Activated CD4-positive, alpha-beta T cell treated with anti-CD3 and anti-CD28 coated beads, Interleukin-2, amount 10 ng/mL, durations not matched to agents 7 days and 5 days (primary cell): ENCODE measurements at regions of chr6 and their contacts with region 1.

Region 1: GRCh38 chr6:31739639-31740396 is at the start of gene MSH5:
- DNase-seq: peak; percentile 98
- H3K4me3 Mint-ChIP-seq: peak within 1 kb of the TSS; percentile 94
- H3K27ac Mint-ChIP-seq: peak within 1 kb of the TSS; percentile 96
- H3K4me1 Mint-ChIP-seq: peaks cover 56% of the 10 kb centered on the region
- H3K27me3 Mint-ChIP-seq: no peaks in the 10 kb centered on the region
- total RNA-seq, gene MSH5: 56.1 to 58.0 TPM

Region 2: GRCh38 chr6:31513456-31514165 is 226.2 kb before region 1 on chr6:
- CTCF ChIA-PET with region 1: no interaction called
- POLR2A ChIA-PET with region 1: no interaction called
- DNase-seq: no peak
- H3K4me3 Mint-ChIP-seq: no peak overlapping the region
- H3K27ac Mint-ChIP-seq: no peak overlapping the region
- H3K4me1 Mint-ChIP-seq: peaks cover 4% of the 10 kb centered on the region
- H3K27me3 Mint-ChIP-seq: peaks cover 7% of the 10 kb centered on the region

Region 3: DNA sequence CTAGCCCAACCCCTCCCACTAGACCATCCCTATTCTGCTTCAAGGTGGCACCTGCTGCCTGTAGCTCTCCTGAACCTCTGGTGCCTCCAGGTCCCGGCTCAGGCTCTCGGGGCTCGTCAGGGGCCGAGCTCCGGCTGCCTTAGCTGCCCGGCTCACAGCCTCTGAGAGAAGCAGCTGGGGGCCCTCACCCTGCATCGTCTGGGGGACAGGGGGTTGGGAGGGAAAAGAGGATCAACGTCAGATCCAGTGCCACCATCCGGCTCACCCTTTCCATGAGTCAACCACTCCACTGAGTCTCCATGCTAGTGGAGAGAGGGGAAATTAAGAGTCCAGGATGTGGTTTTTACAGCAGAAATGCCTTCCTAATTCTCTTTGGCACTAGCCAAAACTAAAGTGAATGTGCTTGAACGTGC is 100.4 kb before region 1 on chr6:
- CTCF ChIA-PET with region 1: no interaction called
- POLR2A ChIA-PET with region 1: no interaction called
- DNase-seq: no peak
- H3K4me3 Mint-ChIP-seq: no peak overlapping the region
- H3K27ac Mint-ChIP-seq: no peak overlapping the region
- H3K4me1 Mint-ChIP-seq: peaks cover 4% of the 10 kb centered on the region
- H3K27me3 Mint-ChIP-seq: no peaks in the 10 kb centered on the region

Region 4: GRCh38 chr6:31729515-31729978 is 10.3 kb before region 1 on chr6:
- CTCF ChIA-PET with region 1: interaction called, 14 read pairs
- POLR2A ChIA-PET with region 1: interaction called, 3 read pairs
- DNase-seq: peak; percentile 80
- H3K4me3 Mint-ChIP-seq: peak overlapping the region; percentile 85
- H3K27ac Mint-ChIP-seq: peak overlapping the region; percentile 76
- H3K4me1 Mint-ChIP-seq: peaks cover 80% of the 10 kb centered on the region
- H3K27me3 Mint-ChIP-seq: no peaks in the 10 kb centered on the region